HEK293T (cell line): ENCODE measurements at regions of chr1 and their contacts with region 1.

Region 1: GRCh38 chr1:47313915-47314664 is at the start of gene STIL:
- DNase-seq: peak; percentile 95

Region 2: DNA sequence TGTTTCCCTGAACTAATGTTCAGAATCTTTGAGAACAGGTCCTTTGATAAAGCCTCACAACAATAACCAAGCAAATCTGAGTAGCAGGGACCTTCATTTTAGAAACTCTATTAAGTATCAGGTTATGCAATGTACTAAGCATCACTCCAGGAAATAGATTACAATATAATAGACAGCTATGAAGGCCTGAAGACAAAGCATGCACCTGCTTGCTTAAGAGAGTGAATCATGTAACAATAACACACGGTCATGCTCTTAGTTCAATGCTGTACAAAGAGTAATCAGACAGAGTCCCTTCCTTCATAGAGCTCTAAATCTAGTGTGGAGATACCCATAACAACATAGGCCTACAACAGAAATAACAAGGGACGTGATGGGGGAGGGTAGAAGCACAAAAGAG is 11.4 kb after region 1 on chr1:
- CTCF ChIA-PET with region 1: interaction called, 4 read pairs
- POLR2A ChIA-PET with region 1: interaction called, 52 read pairs
- DNase-seq: no peak

Region 3: GRCh38 chr1:47333922-47334764 is 20.1 kb after region 1 on chr1:
- CTCF ChIA-PET with region 1: interaction called, 5 read pairs
- POLR2A ChIA-PET with region 1: interaction called, 88 read pairs
- DNase-seq: peak; percentile 86

Region 4: DNA sequence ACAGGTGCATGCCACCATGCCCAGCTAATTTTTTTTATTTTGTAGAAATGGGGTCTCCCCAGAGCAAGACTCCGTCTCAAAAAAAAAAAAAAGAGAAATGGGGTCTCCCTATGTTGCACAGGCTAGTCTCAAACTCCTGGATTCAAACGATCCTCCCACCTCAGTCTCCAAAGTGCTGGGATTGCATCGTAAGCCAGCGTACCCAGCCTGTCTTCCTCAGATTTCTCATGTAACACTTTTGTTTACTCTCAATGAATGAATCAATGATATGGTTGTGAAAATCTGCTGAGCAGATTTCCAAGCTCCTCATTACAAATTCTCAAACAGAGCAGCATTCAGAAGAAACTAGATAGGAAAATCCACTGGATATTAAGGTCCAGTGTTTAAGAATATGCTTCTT is 26.1 kb after region 1 on chr1:
- CTCF ChIA-PET with region 1: interaction called, 4 read pairs
- POLR2A ChIA-PET with region 1: interaction called, 88 read pairs
- DNase-seq: no peak